ENCODE measurements at regions of chr20 and their contacts with region 1.

Region 1: GRCh38 chr20:21303061-21303871 is at the start of gene XRN2:
- DNase-seq: peak; percentile 95 to 96
- H3K4me3 ChIP-seq: peak within 1 kb of the TSS; percentile 87
- H3K4me3 Mint-ChIP-seq: peak within 1 kb of the TSS; percentile 87
- H3K27ac Mint-ChIP-seq: peak within 1 kb of the TSS; percentile 98
- H3K4me1 ChIP-seq: peaks cover 10% of the 10 kb centered on the region; the same call in 1 of the 2 replicates
- H3K4me1 Mint-ChIP-seq: peaks cover 17% of the 10 kb centered on the region
- H3K27me3 ChIP-seq: no peaks in the 10 kb centered on the region
- H3K27me3 Mint-ChIP-seq: no peaks in the 10 kb centered on the region
- CTCF ChIP-seq: peak in 1 of 2 experiments; percentile 9
- total RNA-seq, gene XRN2: 79.8 and 86.3 TPM in 2 replicates

Region 2: DNA sequence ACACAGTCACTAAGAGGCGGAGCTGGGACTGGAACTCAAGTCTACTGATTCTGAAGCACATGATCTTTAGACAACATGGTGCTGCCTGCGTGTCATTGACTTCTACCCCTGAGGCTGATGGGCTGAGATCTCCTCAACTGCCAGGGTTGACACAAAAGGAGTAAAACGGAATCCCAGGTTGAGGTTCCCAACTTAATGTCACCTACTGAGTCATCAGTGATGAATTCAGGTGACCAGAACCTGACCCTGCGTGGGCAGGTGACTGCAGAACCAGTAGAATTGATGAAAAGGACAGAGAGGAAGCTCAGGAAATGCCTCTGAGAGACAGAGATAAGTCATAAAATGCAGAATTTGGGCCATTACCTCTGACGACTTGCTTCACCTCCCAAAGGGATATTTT is 185.2 kb before region 1 on chr20:
- CTCF ChIA-PET with region 1: no interaction called
- POLR2A ChIA-PET with region 1: interaction called, 16 read pairs
- intact Hi-C with region 1: no loop called
- DNase-seq: no peak
- H3K4me3 ChIP-seq: no peak overlapping the region
- H3K4me3 Mint-ChIP-seq: no peak overlapping the region
- H3K27ac Mint-ChIP-seq: no peak overlapping the region
- H3K4me1 ChIP-seq: no peaks in the 10 kb centered on the region
- H3K4me1 Mint-ChIP-seq: no peaks in the 10 kb centered on the region
- H3K27me3 ChIP-seq: no peaks in the 10 kb centered on the region
- H3K27me3 Mint-ChIP-seq: no peaks in the 10 kb centered on the region
- CTCF ChIP-seq: no peak

Region 3: DNA sequence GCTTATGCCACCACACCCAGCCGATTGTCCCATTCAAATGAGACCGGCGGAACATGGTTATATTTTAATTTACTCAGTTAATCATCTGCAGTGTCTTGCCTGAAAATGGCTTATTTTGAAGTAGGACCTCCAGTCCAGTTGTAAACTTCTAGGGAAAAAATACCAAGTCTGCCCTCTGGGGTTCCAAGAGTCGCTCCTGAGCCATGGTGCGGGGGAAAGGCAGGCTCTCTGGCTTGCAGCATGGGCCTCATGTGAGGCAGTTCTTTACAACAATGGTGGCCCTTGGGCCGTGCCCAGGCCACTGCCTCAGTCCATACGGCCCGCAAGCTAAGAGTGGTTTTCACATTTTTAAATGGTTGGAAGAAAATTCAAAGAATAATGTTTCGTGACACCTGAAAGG is 62.9 kb before region 1 on chr20:
- CTCF ChIA-PET with region 1: no interaction called
- POLR2A ChIA-PET with region 1: no interaction called
- intact Hi-C with region 1: no loop called
- DNase-seq: peak in 1 of 2 experiments; percentile 5
- H3K4me3 ChIP-seq: no peak overlapping the region
- H3K4me3 Mint-ChIP-seq: no peak overlapping the region
- H3K27ac Mint-ChIP-seq: no peak overlapping the region
- H3K4me1 ChIP-seq: no peaks in the 10 kb centered on the region
- H3K4me1 Mint-ChIP-seq: no peaks in the 10 kb centered on the region
- H3K27me3 ChIP-seq: no peaks in the 10 kb centered on the region
- H3K27me3 Mint-ChIP-seq: no peaks in the 10 kb centered on the region
- CTCF ChIP-seq: no peak

Region 4: DNA sequence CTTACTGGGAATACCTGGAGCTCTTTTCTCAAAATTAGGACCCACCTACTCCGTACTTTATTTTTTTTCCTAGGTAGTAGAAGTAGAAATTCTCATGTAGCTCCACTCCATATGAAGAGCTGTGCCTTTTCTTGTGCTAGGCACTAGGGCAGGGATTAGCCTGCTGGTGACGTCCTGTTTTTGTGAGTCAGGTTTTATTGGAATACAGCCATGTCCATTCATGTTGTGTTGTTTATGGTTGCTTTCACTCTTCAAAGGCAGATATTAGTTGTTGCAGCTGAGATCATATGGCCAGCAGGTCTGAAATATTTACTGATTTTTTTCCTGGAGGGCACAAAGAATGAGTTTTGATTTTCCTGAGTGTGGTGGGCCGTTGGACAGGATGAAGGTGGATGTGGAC is 20.4 kb after region 1 on chr20:
- CTCF ChIA-PET with region 1: no interaction called
- POLR2A ChIA-PET with region 1: interaction called, 10 read pairs
- intact Hi-C with region 1: no loop called
- DNase-seq: no peak
- H3K4me3 ChIP-seq: no peak overlapping the region
- H3K4me3 Mint-ChIP-seq: no peak overlapping the region
- H3K27ac Mint-ChIP-seq: no peak overlapping the region
- H3K4me1 ChIP-seq: no peaks in the 10 kb centered on the region
- H3K4me1 Mint-ChIP-seq: peaks cover 15% of the 10 kb centered on the region
- H3K27me3 ChIP-seq: no peaks in the 10 kb centered on the region
- H3K27me3 Mint-ChIP-seq: no peaks in the 10 kb centered on the region
- CTCF ChIP-seq: no peak